ENCODE measurements at regions of chr17 and their contacts with region 1.

Region 1: GRCh38 chr17:64281962-64282727 is 19.1 kb upstream of the TEX2 start:
- DNase-seq: peak; percentile 70
- H3K4me3 Mint-ChIP-seq: no peak overlapping the region
- H3K27ac Mint-ChIP-seq: no peak overlapping the region
- H3K4me1 Mint-ChIP-seq: peaks cover 7% of the 10 kb centered on the region
- H3K27me3 Mint-ChIP-seq: peaks cover 20% of the 10 kb centered on the region

Region 2: GRCh38 chr17:63911657-63912426 is 370.3 kb before region 1 on chr17:
- CTCF ChIA-PET with region 1: no interaction called
- DNase-seq: peak; percentile 77
- H3K4me3 Mint-ChIP-seq: no peak overlapping the region
- H3K27ac Mint-ChIP-seq: no peak overlapping the region
- H3K4me1 Mint-ChIP-seq: peaks cover 2% of the 10 kb centered on the region
- H3K27me3 Mint-ChIP-seq: peaks cover 63% of the 10 kb centered on the region

Region 3: DNA sequence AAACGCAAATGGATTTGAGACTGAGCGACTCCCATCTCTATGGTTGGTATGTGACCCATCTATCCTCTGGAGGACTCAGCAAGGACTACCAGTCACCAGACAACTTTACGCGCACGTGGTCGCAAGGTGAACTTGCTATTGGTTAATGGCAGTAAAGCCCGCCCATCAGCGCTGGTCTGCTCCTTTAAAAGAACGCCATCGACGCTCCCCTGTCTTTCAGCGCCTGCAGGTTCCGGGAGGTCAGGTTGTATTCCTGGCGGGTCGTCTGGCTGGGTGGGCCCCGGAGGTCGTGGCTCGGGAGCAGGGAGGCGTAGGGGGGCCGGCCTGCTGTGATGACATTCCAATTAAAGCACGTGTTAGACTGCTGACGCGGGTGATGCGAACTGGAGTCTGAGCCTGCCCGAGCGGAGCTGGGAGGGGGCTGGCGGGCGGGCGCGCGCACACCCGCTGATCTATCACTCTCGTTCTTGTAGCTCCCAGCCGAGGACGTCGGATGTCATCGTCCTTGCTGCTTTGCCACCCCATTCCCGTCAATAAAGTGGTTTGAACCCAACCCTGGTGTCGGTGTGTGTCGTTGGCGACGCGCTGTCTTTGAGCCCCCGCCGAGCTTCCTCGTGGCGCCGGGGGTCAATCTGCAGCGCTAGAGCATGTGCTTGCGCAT is 136.3 kb before region 1 on chr17:
- CTCF ChIA-PET with region 1: interaction called, 25 read pairs
- DNase-seq: peak; percentile 97
- H3K4me3 Mint-ChIP-seq: no peak overlapping the region
- H3K27ac Mint-ChIP-seq: no peak overlapping the region
- H3K4me1 Mint-ChIP-seq: peaks cover 27% of the 10 kb centered on the region
- H3K27me3 Mint-ChIP-seq: no peaks in the 10 kb centered on the region

Region 4: DNA sequence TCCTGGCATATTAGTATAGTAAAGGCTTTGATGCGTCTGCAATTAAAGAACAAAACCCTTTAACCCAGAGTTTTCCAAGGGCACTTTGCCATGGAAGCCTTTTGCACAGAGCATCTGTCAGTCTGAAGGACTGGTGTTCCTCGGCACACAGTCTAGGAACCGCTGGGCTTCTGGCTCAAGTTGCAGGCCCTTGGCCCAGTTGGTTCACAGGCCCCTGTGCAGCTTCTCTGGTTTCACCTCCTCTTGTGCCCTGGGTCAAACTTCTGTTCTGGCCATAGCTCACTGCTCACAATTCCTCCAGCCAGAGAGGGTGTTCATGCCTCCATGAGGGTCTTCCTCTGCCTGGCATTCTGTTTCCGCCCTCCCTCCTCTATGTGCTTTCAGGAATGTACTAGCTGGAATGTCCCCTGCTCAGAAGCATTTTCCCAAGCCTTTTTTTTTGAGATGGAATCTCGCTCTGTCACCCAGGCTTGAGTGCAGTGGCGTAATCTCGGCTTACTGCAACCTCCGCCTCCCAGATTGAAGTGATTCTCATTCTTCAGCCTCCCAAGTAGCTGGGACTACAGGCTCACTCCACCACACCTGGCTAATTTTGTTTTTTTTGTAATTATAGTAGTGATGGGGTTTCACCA is 15.4 kb after region 1 on chr17:
- CTCF ChIA-PET with region 1: interaction called, 10 read pairs
- DNase-seq: no peak
- H3K4me3 Mint-ChIP-seq: no peak overlapping the region
- H3K27ac Mint-ChIP-seq: no peak overlapping the region
- H3K4me1 Mint-ChIP-seq: no peaks in the 10 kb centered on the region
- H3K27me3 Mint-ChIP-seq: peaks cover 36% of the 10 kb centered on the region